CD8-positive, alpha-beta T cell (primary cell): ENCODE measurements at regions of chr11 and their contacts with region 1.

Region 1: DNA sequence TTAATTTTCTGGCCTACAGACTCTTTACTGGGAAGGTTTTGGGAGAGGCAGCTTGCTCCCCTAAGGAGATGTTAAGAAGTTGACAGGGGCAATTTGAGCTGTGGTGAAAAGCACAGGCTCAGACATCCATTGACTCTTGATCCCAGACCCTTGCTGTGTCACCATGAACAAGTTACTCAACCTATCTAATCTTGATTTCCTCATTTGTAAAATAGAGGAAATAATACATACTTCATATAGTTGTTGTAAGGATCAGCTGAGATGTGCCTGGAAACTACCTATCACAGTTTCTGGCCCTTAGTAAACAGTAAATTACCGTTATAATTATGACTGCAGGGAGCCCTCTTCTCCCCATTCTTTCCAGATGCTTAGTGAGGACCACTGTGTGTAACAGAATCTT is 16.6 kb upstream of the SCGB1D4 start:
- DNase-seq: no peak
- ATAC-seq: no peak
- H3K4me3 ChIP-seq: no peak overlapping the region
- H3K4me3 Mint-ChIP-seq: no peak overlapping the region
- H3K27ac ChIP-seq: no peak overlapping the region
- H3K27ac Mint-ChIP-seq: no peak overlapping the region
- H3K4me1 ChIP-seq: peaks cover 6% of the 10 kb centered on the region
- H3K4me1 Mint-ChIP-seq: peaks cover 13% of the 10 kb centered on the region
- H3K27me3 ChIP-seq: no peaks in the 10 kb centered on the region
- H3K27me3 Mint-ChIP-seq: peaks cover 24% of the 10 kb centered on the region
- CTCF ChIP-seq: no peak

Region 2: GRCh38 chr11:61871158-61871597 is 444.3 kb before region 1 on chr11:
- CTCF ChIA-PET with region 1: no interaction called
- POLR2A ChIA-PET with region 1: no interaction called
- intact Hi-C with region 1: loop called in 1 of 2 experiments (anchors 1 kb)
- DNase-seq: peak; percentile 30 to 74 (median 64)
- ATAC-seq: peak; percentile 94
- H3K4me3 ChIP-seq: no peak overlapping the region
- H3K4me3 Mint-ChIP-seq: peak overlapping the region; percentile 64
- H3K27ac ChIP-seq: no peak overlapping the region
- H3K27ac Mint-ChIP-seq: no peak overlapping the region
- H3K4me1 ChIP-seq: no peaks in the 10 kb centered on the region
- H3K4me1 Mint-ChIP-seq: peaks cover 3% of the 10 kb centered on the region
- H3K27me3 ChIP-seq: no peaks in the 10 kb centered on the region
- H3K27me3 Mint-ChIP-seq: no peaks in the 10 kb centered on the region
- CTCF ChIP-seq: peak; percentile 89

Region 3: GRCh38 chr11:62280452-62280851 is 35.0 kb before region 1 on chr11:
- CTCF ChIA-PET with region 1: no interaction called
- POLR2A ChIA-PET with region 1: no interaction called
- intact Hi-C with region 1: no loop called
- DNase-seq: no peak
- ATAC-seq: no peak
- H3K4me3 ChIP-seq: no peak overlapping the region
- H3K4me3 Mint-ChIP-seq: no peak overlapping the region
- H3K27ac ChIP-seq: no peak overlapping the region
- H3K27ac Mint-ChIP-seq: no peak overlapping the region
- H3K4me1 ChIP-seq: no peaks in the 10 kb centered on the region
- H3K4me1 Mint-ChIP-seq: no peaks in the 10 kb centered on the region
- H3K27me3 ChIP-seq: no peaks in the 10 kb centered on the region
- H3K27me3 Mint-ChIP-seq: peaks cover 4% of the 10 kb centered on the region
- CTCF ChIP-seq: no peak

Region 4: GRCh38 chr11:62360685-62361084 is 45.3 kb after region 1 on chr11:
- CTCF ChIA-PET with region 1: no interaction called
- POLR2A ChIA-PET with region 1: no interaction called
- intact Hi-C with region 1: no loop called
- DNase-seq: no peak
- ATAC-seq: no peak
- H3K4me3 ChIP-seq: no peak overlapping the region
- H3K4me3 Mint-ChIP-seq: no peak overlapping the region
- H3K27ac ChIP-seq: no peak overlapping the region
- H3K27ac Mint-ChIP-seq: no peak overlapping the region
- H3K4me1 ChIP-seq: no peaks in the 10 kb centered on the region
- H3K4me1 Mint-ChIP-seq: no peaks in the 10 kb centered on the region
- H3K27me3 ChIP-seq: no peaks in the 10 kb centered on the region
- H3K27me3 Mint-ChIP-seq: no peaks in the 10 kb centered on the region
- CTCF ChIP-seq: no peak